Left cardiac atrium (tissue), 4 donors: ENCODE measurements at regions of chr16 and their contacts with region 1.

Region 1: DNA sequence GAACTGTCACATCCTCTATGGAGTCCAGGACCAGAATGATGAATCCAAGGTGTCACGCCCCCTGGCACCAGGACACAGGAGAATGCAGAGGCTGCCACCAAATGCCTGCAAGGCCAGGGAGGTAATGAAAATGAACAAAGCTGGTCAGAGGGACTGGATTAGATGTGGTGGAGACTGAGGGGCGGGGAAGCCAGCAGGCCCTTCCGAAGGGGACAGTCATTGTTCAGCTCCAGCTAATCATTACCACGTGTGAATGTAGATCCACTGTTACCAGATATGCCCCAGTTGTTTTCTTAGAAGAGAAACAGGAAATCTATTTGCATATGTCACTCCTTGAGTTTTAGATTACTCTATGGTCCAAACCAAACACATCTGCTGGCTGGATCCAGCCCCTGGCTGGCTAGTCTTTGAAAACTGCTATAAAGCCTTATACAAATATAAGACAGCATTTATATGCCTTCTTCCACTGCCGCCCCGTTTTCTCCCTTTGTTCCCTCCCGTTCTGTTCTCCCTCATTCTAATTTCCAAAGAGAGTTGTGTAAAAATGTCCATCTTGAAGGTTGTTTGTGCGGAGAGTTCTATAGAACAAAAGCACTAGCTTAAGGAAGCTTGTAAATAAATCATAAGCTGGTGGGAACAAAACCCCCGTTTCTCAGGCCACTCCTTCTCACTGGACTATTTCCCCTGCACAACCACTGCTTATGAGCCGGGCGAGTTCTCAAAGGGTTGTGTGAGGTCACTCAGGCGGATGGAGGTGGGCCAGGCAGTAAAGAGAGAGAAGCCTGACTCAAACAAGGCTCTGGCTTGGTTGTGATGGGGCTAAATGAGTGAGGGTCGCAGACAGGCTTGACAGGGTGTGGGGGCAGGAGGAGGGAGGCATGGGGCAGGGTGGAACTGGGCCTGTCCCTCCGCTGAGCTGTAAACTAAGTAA is 14.2 kb downstream of the CRYM start:
- DNase-seq: peak; percentile 40
- ATAC-seq: peak in 1 of 2 donors; percentile 46

Region 2: GRCh38 chr16:21203155-21203797 is 60.6 kb before region 1 on chr16:
- intact Hi-C with region 1: loop called in 1 of 2 experiments (anchors 10 kb)
- DNase-seq: no peak
- ATAC-seq: no peak

Region 3: DNA sequence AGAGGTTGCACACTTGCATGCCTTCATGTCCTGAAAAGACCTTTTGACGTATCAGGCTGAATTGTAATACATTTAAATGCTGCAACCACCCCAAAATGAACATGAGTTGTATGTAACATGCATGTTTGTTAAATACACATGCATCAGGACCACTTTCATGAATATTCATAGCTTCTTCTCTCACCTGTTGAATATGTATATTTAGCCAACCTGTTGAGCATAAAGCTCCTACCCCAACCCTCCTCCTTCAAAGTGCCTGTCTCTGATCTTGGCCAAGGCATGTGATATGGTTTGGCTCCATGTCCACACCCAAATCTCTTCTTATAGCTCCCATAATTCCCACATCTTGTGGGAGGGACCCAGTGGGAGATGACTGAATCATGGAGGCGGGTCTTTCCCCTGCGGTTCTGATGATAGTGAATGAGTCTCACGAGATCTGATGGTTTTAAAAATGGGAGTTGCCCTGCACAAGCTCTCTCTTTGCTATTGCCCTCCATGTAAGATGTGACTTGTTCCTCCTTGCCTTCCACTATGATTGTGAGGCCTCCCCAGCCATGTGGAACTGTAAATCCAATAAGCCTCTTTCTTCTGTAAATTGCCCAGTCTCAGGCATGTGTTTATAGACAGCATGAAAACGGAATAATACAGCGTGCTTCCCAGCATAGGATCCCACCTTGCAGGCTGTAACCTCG is 17.9 kb after region 1 on chr16:
- intact Hi-C with region 1: loop called in 1 of 2 experiments (anchors 2 kb)
- DNase-seq: no peak
- ATAC-seq: no peak

Region 4: DNA sequence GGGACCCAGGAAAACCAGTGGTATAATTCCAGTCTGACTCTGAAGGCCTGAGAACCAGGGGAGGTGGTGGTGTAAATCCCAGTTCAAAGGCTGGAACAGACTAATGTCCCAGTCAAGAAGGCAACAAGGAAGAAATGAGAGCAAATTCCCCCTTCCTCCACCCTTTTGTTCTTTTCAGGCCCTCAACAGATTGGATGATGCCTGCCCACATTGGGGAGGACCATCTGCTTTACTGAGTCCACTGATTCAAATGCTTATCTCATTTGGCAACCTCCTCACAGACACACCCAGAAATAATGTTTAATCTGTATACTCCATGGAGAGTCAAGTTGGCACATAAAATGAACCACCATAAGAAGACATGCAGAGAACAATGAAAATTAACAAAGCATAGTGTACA is 76.0 kb after region 1 on chr16:
- intact Hi-C with region 1: no loop called
- DNase-seq: no peak
- ATAC-seq: no peak

Region 5: DNA sequence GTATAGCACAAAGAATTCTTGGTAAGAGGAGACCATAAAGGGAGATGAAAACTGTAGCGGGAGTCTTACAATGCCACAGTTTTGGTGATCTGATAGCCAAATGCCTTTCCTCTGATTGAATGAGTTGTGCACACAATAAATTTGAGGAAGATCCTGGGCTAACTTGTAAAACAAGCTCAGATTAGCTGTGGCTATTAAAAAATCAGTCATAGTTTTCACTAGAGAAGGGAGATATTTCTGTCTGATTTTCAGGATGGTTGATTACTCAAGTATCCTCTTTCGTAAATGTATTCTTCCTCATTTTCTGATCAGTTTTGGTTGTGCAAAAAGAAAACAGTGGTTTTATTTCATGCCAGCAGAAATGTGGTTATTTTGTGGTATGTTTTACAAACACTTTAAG is 326.4 kb after region 1 on chr16:
- intact Hi-C with region 1: no loop called
- DNase-seq: no peak
- ATAC-seq: no peak

Region 6: DNA sequence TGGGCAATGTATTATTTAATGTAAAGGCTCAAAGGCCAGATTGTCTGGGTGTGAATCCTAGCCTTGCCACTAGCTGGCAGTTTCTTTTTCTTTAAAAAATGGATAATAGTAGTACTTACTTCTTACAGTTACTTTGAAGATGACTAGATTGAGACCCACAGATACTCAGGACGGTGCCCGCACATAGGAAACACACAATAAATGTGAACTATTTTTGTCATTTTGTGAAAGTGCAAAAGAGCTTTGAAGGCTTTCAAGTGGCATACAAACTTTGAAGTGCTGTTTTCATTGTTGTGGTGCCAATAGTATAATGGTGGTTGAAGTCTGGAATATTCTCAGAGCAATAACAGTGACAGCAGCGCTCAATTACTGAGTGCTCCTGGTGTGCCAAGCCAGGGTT is 463.4 kb after region 1 on chr16:
- intact Hi-C with region 1: no loop called
- DNase-seq: no peak
- ATAC-seq: no peak